Left ventricle myocardium inferior (tissue), 1 donor: ENCODE measurements at regions of chr2 and their contacts with region 1.

Region 1: DNA sequence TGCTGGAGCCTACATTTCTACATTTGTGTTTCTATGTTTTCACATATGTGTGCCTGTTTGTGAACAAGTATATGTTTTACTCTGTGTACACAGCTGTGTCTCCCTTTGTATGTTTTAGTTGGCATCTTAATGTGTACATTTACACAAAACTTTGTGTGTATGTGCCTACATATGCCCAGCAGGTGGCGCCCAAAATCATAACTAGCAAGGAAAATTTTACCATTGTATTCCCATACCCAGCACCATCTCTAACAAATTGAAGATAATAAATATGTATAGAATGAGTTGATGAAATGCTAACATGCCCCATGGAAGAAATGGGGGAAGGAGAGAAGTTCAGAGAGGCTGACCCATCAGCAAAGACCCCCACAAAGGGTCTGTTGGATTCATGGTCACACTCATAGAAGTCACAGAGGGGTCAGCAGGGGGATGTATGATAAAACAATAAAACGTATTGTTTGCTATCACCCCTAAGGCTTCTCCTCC is 48.1 kb downstream of the PKDCC start:
- DNase-seq: peak; percentile 70
- H3K4me3 ChIP-seq: no peak overlapping the region
- H3K27ac ChIP-seq: no peak overlapping the region
- H3K4me1 ChIP-seq: peaks cover 21% of the 10 kb centered on the region
- H3K27me3 ChIP-seq: no peaks in the 10 kb centered on the region
- CTCF ChIP-seq: peak; percentile 89

Region 2: DNA sequence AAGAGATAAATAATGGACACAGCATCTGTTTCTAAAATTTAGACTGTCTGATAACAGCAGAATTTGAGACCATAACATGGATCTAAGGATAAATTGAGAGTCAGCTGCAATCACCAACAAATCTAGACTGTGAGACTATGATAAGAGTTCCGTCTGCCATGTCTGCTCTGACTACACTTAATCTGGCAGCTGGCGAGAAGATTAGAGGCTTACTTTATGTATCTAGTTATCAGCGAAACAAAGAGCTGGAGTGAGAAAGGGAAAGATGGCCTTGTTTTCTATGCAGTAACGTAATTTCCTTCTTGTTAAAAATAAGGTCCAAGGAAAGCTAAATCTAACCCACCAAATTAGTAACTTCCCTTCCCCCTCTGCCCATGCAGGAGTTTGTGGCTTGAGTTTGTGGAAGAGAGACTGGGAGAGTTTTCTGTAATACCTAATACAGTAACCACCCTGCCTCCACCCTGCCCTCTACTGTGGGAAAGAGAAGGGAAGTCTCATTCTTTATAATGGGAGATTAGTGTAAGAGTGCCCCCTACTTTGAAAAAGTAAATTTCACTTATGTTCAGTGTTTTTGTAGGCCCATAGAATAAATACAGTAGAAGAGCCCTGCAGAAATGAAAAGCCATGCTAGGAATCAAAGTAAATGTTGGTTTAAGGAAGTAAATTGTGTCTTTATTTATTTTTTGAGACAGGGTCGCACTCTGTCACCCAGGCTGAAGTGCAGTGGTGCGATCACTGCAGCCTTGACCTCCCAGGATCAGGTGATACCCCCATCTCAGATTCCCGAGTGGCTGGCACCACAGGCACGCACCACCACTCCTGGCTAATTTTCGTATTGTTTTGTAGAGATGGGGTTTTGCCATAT is 100.7 kb after region 1 on chr2:
- intact Hi-C with region 1: no loop called
- DNase-seq: no peak
- H3K4me3 ChIP-seq: no peak overlapping the region
- H3K27ac ChIP-seq: no peak overlapping the region
- H3K4me1 ChIP-seq: peaks cover 31% of the 10 kb centered on the region
- H3K27me3 ChIP-seq: no peaks in the 10 kb centered on the region
- CTCF ChIP-seq: peak; percentile 69

Region 3: DNA sequence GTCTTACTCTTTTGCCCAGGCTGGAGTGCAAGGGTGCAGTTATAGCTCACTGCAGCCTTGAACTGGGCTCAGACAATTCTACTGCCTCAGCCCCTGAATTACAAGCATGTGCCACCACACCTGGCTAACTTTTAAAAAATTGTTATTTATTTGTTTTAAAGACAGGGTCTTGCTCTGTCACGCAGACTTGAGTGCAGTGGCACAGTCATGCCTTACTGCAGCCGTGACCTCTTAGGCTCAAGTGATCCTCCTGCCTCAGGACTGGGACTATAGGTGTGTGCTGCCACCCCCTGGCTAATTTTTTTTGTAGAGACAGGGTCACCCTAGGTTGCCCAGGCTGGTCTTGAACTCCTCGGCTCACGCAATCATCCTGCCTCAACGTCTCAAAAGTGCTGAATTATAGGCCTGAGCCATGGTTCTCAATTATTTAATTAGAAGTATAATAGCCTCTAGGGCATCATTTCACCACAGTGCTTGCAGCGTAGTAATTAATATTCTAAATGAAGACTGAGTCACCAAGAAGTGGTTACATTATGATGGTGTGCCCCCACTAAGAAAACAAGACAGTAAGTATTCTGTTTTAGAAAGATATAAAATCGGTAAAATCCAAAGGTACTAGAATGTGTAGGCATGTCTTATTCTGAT is 142.8 kb after region 1 on chr2:
- intact Hi-C with region 1: loop called (anchors 10 kb)
- DNase-seq: peak; percentile 21
- H3K4me3 ChIP-seq: no peak overlapping the region
- H3K27ac ChIP-seq: no peak overlapping the region
- H3K4me1 ChIP-seq: peaks cover 13% of the 10 kb centered on the region
- H3K27me3 ChIP-seq: no peaks in the 10 kb centered on the region
- CTCF ChIP-seq: peak; percentile 66

Region 4: GRCh38 chr2:42339191-42339912 is 243.4 kb after region 1 on chr2:
- intact Hi-C with region 1: loop called (anchors 10 kb)
- DNase-seq: no peak
- H3K4me3 ChIP-seq: no peak overlapping the region
- H3K27ac ChIP-seq: no peak overlapping the region
- H3K4me1 ChIP-seq: peaks cover 18% of the 10 kb centered on the region
- H3K27me3 ChIP-seq: no peaks in the 10 kb centered on the region
- CTCF ChIP-seq: no peak